ENCODE measurements at regions of chr15 and their contacts with region 1.

Region 1: GRCh38 chr15:74995241-74995778 is at the start of gene SCAMP5:
- DNase-seq: peak; percentile 98
- ATAC-seq: peak; percentile 98
- H3K4me3 Mint-ChIP-seq: peak within 1 kb of the TSS; percentile 69
- H3K27ac Mint-ChIP-seq: no peak within 1 kb of the TSS
- H3K4me1 Mint-ChIP-seq: peaks cover 16% of the 10 kb centered on the region
- H3K27me3 Mint-ChIP-seq: peaks cover 8% of the 10 kb centered on the region
- total RNA-seq, gene SCAMP5: 3.9 to 4.5 TPM

Region 2: DNA sequence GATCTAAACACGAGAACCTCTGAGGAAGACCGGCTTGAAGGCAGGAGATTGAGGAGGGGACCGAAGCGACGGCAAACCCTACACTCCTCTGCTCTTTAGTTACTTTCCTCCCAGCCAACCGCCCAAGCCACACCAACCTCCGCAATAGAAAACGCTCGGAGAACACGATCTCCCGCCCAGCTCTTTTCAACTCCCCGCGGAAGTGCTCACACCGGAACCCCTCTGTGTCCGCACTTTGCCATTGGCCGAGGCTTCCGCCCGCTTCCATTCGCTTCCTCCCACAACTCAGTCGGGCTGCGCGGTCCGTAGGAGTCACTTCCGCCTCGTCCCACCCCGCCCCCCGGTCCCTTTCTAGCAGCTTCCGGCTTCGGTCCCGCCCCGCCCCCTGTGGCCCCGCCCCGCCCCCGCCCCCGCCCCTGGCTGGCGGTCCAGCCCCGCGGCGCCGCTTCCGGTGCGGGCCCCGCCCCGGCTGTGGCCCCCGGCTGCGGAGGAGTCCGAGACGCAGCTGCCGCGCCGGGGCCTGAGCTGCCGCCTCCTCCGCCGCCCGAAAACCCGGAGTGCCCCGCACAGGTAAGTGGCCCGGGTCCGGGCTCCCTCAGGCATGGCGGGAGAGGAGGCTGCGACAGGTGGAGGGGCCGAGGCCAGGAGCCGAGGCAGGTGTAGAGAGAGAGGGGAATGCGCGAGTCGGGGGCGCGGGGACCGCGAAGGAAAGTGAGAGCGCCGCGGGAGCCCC is 454.4 kb before region 1 on chr15 and contains the start of gene ARID3B:
- CTCF ChIA-PET with region 1: no interaction called
- POLR2A ChIA-PET with region 1: no interaction called
- intact Hi-C with region 1: no loop called
- DNase-seq: peak; percentile 99
- ATAC-seq: peak; percentile 88
- H3K4me3 Mint-ChIP-seq: peak within 1 kb of the TSS; percentile 94
- H3K27ac Mint-ChIP-seq: peak within 1 kb of the TSS; percentile 98
- H3K4me1 Mint-ChIP-seq: peaks cover 43% of the 10 kb centered on the region
- H3K27me3 Mint-ChIP-seq: peaks cover 2% of the 10 kb centered on the region
- total RNA-seq, gene ARID3B: 23.9 to 25.4 TPM

Region 3: DNA sequence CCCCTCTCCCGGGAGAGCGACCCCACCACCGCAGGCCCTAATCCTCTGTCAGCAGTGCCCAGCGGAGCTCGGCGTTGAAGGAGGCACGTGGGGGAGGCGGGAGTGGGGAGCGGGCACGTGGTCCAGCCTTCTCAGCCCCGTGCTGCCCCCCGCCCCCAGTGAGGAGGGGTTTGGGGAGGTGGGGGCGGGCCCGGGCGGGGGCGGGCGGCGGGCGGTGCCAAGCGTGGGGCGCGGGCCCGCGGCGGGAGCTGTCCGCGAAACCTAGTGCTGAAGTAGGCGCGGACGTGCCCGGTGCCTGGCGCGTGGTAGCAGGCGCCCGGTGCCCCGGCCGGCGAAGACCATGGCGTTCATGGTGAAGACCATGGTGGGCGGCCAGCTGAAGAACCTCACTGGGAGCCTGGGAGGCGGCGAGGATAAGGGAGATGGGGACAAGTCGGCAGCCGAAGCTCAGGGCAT is 168.9 kb before region 1 on chr15 and contains the start of gene CPLX3:
- CTCF ChIA-PET with region 1: no interaction called
- POLR2A ChIA-PET with region 1: no interaction called
- intact Hi-C with region 1: loop called in 1 of 2 experiments (anchors 2 kb)
- DNase-seq: peak; percentile 69
- ATAC-seq: no peak
- H3K4me3 Mint-ChIP-seq: no peak within 1 kb of the TSS
- H3K27ac Mint-ChIP-seq: no peak within 1 kb of the TSS
- H3K4me1 Mint-ChIP-seq: peaks cover 13% of the 10 kb centered on the region
- H3K27me3 Mint-ChIP-seq: peaks cover 22% of the 10 kb centered on the region
- total RNA-seq, gene CPLX3: 0.11 TPM in 1 of 2 experiments, not detected in the other

Region 4: DNA sequence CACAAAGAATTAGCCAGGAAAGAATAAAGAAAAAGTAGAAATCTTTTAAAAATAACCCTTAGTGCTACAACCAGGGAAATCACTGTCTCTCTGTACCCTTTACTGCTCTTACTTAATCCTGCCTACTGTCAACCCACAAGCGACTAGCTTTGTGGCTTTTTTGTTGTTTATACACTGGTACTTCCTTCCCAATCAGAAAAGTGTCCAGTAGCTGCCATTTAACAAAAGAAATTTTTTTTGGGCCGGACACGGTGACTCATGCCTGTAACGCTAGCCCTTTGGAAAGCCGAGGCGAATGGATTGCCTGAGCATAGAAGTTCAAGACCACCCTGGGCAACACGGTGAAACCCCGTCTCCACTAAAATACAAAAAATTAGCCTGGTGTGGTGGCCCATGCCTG is 74.9 kb before region 1 on chr15:
- CTCF ChIA-PET with region 1: no interaction called
- POLR2A ChIA-PET with region 1: no interaction called
- intact Hi-C with region 1: no loop called
- DNase-seq: no peak
- ATAC-seq: no peak
- H3K4me3 Mint-ChIP-seq: no peak overlapping the region
- H3K27ac Mint-ChIP-seq: no peak overlapping the region
- H3K4me1 Mint-ChIP-seq: peaks cover 5% of the 10 kb centered on the region
- H3K27me3 Mint-ChIP-seq: no peaks in the 10 kb centered on the region

Region 5: GRCh38 chr15:74950078-74951000 is 45.0 kb before region 1 on chr15:
- CTCF ChIA-PET with region 1: interaction called, 11 read pairs
- POLR2A ChIA-PET with region 1: no interaction called
- intact Hi-C with region 1: no loop called
- DNase-seq: peak; percentile 87
- ATAC-seq: peak; percentile 87
- H3K4me3 Mint-ChIP-seq: no peak overlapping the region
- H3K27ac Mint-ChIP-seq: no peak overlapping the region
- H3K4me1 Mint-ChIP-seq: peaks cover 7% of the 10 kb centered on the region
- H3K27me3 Mint-ChIP-seq: no peaks in the 10 kb centered on the region

Region 6: DNA sequence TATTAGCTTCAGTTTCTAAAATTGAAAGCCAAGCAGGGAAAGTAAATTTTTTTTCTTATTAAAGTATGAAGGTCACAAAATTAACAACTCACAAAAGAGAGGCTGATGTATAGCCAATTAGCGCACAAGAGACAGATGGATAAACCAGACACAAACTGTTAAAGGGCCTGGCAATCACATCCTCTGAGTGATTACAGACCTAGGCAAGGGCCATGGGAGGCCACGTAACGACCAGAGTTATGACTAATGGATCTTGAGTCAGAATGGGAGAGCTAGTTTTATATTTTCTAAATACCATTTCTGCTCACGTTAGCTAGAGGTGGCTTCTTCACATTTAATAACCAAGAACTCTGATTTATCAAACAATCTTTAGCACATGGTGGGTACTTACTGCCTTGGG is 17.7 kb before region 1 on chr15:
- CTCF ChIA-PET with region 1: interaction called, 5 read pairs
- POLR2A ChIA-PET with region 1: no interaction called
- intact Hi-C with region 1: loop called in 1 of 2 experiments (anchors 1 kb)
- DNase-seq: peak; percentile 66
- ATAC-seq: peak; percentile 93
- H3K4me3 Mint-ChIP-seq: no peak overlapping the region
- H3K27ac Mint-ChIP-seq: no peak overlapping the region
- H3K4me1 Mint-ChIP-seq: peaks cover 13% of the 10 kb centered on the region
- H3K27me3 Mint-ChIP-seq: peaks cover 16% of the 10 kb centered on the region